Sigmoid colon (tissue), 7 donors: ENCODE measurements at regions of chr19 and their contacts with region 1.

Region 1: GRCh38 chr19:18450931-18451845 is 13.3 kb upstream of the ISYNA1 start:
- DNase-seq: peak; percentile 93
- H3K4me3 ChIP-seq: no peak overlapping the region
- H3K27ac ChIP-seq: peak overlapping the region in 2 of 4 donors; percentile 20 to 25
- H3K4me1 ChIP-seq: peaks cover 0 to 16% (median 11%) of the 10 kb centered on the region in 4 donors
- H3K27me3 ChIP-seq: no peaks in the 10 kb centered on the region
- CTCF ChIP-seq: peak; percentile 94 to 98 (median 96)
- EP300 ChIP-seq: no peak
- POLR2A ChIP-seq: no peak

Region 2: DNA sequence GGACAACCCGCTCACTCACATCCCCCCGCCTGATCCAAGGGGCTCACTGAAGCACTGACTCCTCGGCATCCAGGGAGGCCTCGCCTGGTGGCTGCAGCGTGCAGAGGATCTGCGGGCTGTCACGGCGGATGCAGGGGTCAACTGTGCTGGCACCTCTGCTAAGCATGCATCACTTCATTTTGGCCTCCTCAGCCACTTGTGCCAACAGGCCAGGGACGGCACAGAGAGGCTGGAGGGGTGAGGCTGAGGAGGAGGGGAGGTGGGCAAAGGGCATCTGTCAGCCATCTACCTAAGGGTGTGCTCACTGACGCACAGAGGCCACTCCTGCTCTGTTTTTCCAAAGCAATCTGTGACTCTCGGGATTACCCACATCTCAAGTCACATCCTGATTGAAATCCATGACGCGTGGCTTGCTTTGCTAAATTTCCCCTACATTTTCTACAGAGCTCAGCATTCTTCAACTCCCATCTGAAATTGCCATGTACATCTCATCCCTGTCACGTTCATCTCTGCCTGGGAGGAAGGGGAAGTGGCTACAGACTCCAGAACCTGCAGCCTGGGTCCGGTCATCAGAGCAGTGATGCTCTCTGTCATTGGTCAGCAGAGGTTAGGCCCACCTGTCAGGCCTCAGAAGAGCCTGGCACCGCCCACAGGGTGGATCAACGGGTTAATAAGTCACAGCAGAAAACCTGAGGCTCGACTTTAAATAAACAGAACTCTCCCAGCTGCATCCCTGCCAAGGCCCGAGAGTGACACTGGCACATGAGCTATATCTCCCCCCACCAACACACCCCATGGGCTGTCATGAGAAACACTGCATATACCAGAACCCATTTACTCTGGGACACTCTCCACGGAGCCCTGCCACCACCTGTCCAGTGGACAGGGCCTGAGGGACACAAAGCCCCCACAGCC is 53.0 kb after region 1 on chr19:
- intact Hi-C with region 1: loop called (anchors 10 kb)
- DNase-seq: no peak
- H3K4me3 ChIP-seq: no peak overlapping the region
- H3K27ac ChIP-seq: peak overlapping the region; percentile 64 to 74 (median 70)
- H3K4me1 ChIP-seq: peaks cover 0 to 100% (median 99%) of the 10 kb centered on the region in 4 donors
- H3K27me3 ChIP-seq: no peaks in the 10 kb centered on the region
- CTCF ChIP-seq: no peak
- EP300 ChIP-seq: peak in 1 of 4 donors; percentile 55
- POLR2A ChIP-seq: no peak

Region 3: DNA sequence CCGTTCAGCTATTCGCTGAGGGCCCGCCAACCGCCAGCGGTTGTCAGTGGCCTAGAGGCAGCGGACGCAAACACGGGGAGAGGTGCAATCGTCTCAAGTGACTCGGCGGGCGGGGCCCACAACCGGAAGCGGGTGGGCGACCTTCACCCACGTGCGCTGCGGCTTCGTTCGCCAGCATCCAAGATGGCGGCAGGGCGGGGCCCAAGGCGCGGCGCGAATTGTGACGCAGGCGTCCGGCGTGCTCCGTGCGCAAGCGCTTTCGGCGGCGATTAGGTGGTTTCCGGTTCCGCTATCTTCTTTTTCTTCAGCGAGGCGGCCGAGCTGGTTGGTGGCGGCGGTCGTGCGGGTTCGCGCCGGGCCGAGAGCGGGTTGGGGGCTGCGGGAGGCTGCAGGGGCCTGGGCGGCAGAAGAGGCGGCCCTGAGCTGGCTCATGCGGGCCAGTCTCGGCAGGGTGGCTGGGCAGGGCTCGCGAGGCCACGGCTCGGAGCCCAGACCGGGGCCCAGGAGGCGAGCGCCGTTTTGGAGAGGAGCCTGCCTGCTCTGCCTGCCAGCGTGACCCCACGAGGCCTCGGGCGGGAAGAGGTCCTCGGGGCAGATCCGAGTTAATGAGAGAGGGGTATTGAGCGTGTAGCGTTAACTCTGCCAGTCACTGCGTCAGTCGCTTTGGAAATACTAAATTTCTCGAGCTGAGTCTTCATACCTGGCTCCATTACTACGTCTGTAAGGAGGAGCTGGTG is 120.5 kb after region 1 on chr19 and contains the start of gene UBA52:
- intact Hi-C with region 1: loop called (anchors 5 kb)
- DNase-seq: peak; percentile 99
- H3K4me3 ChIP-seq: peak within 1 kb of the TSS; percentile 67 to 99 (median 92)
- H3K27ac ChIP-seq: peak within 1 kb of the TSS; percentile 88 to 96 (median 94)
- H3K4me1 ChIP-seq: peaks cover 0 to 25% (median 22%) of the 10 kb centered on the region in 4 donors
- H3K27me3 ChIP-seq: no peaks in the 10 kb centered on the region
- CTCF ChIP-seq: no peak
- EP300 ChIP-seq: peak in 2 of 4 donors; percentile 17 to 85
- POLR2A ChIP-seq: peak; percentile 87 to 91
- total RNA-seq, gene UBA52: 450 to 1,088 (median 720) TPM

Region 4: GRCh38 chr19:18636183-18636968 is 185.2 kb after region 1 on chr19:
- intact Hi-C with region 1: no loop called
- DNase-seq: peak; percentile 99
- H3K4me3 ChIP-seq: peak overlapping the region; percentile 72 to 97 (median 92)
- H3K27ac ChIP-seq: peak overlapping the region; percentile 86 to 94 (median 90)
- H3K4me1 ChIP-seq: peaks cover 0 to 26% (median 21%) of the 10 kb centered on the region in 4 donors
- H3K27me3 ChIP-seq: no peaks in the 10 kb centered on the region
- CTCF ChIP-seq: no peak
- EP300 ChIP-seq: no peak
- POLR2A ChIP-seq: no peak